GM13977 (cell line): ENCODE measurements at regions of chr2 and their contacts with region 1.

Region 1: GRCh38 chr2:111883661-111884591 is at the start of gene ANAPC1:
- DNase-seq: peak; percentile 89
- CTCF ChIP-seq: no peak

Region 2: GRCh38 chr2:112048887-112049286 is 165.0 kb after region 1 on chr2:
- in situ Hi-C with region 1: loop called (anchors 10 kb)
- DNase-seq: peak; percentile 42
- CTCF ChIP-seq: peak; percentile 73

Region 3: DNA sequence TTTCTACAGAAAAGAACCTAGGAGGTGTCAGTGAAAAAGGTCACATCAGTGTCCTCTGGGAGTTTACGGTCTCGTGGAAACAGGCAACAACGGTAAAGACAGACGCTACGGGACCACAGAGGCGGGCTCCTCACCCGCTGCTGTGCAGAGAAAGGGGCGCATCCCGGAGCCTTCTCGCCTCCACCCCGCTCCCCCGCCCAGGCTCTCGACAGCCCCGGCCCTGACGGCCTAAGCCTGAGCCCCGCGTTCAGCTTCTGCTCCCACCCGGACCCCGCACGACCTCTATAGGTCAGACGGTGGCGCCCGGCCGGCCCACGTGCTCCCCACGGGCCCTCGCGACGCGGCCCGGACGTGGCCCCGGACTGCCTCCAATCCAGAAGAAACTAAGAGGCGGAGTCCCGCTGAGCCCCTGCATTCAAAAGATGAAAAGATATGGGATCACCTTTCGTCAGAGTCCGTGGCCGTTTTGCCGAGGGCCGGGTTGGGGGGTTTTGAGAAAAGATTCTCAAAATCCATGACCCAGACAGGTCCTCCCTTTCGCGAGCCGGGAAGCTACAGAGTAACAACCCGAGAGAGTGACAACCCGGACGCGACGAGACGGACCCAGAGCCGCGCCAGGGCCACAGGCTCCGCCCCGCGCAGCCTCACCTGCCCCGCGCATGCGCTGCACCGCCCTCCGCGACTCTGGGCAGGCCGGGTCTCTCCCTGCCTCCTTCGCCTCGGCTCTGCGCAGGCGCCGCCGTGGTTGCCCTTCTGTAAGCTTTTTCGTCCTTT is 370.7 kb after region 1 on chr2 and contains the start of gene ZC3H8:
- in situ Hi-C with region 1: loop called (anchors 25 kb)
- DNase-seq: peak; percentile 99
- CTCF ChIP-seq: peak; percentile 41

Region 4: DNA sequence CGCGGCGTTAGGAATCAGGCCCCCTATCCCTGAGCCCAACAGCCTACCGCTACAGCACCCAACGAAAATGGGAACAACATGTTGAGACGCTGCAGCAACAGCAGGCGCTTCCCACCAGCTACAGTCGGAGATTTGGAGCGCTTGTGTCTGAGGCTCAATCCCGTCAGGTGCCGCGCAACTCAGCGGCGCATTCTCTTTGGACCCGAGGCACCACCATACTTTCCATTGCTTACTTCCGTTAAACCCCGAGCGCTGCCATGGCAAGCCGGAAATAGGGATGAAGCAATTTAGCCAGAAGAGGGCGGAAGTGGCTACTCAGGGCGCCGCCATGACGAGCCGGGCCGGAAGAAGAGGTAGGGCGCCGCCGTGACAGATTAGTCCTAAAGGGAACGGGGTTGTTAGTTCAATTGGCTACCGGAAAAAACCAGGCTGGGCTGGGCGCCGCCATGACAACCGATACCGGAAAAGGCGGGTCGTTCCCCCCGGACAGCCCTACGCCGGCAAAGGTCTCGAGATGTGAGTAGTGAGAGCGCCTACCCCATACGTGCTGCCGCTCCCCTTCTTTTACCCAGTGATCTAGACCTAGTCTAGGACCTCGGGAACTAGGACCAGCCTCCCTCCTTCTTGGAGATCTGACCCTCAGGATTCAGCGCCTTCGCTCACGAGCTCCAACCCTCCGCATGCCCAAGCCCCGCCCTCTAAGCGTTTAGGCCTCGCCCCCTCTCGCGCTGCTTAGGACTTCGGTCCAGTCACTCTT is 700.4 kb after region 1 on chr2 and contains the start of gene CHCHD5:
- in situ Hi-C with region 1: loop called (anchors 25 kb)
- DNase-seq: peak; percentile 86
- CTCF ChIP-seq: peak; percentile 13